ENCODE measurements at regions of chr18 and their contacts with region 1.

Region 1: GRCh38 chr18:27540111-27540510 is 355.0 kb upstream of the CHST9 start:
- DNase-seq: no peak
- H3K4me3 ChIP-seq: no peak overlapping the region
- CTCF ChIP-seq: no peak

Region 2: DNA sequence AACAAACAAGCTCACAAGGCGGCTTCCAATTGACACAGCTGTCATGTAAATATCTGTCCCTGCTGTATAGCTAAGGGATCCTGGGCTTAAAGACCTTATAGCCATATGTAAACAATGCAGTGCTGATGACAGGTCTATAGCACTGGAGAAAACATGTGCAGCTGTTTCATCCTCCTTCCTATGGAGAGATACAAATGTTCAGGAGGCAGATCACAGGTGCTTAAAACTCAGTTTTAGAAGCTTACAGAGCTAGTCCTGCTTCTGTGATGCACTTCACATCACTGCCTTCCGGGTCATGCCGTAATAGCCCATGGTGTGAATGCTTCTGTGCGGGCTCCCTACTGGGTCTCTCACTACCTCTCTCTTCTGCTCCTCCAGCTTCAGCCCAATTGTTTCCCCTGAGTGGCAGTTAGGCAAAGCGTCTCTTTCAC is 92.6 kb before region 1 on chr18:
- in situ Hi-C with region 1: loop called (anchors 5 kb)
- DNase-seq: no peak
- H3K4me3 ChIP-seq: no peak overlapping the region
- CTCF ChIP-seq: no peak